ENCODE measurements at regions of chr11 and their contacts with region 1.

Region 1: DNA sequence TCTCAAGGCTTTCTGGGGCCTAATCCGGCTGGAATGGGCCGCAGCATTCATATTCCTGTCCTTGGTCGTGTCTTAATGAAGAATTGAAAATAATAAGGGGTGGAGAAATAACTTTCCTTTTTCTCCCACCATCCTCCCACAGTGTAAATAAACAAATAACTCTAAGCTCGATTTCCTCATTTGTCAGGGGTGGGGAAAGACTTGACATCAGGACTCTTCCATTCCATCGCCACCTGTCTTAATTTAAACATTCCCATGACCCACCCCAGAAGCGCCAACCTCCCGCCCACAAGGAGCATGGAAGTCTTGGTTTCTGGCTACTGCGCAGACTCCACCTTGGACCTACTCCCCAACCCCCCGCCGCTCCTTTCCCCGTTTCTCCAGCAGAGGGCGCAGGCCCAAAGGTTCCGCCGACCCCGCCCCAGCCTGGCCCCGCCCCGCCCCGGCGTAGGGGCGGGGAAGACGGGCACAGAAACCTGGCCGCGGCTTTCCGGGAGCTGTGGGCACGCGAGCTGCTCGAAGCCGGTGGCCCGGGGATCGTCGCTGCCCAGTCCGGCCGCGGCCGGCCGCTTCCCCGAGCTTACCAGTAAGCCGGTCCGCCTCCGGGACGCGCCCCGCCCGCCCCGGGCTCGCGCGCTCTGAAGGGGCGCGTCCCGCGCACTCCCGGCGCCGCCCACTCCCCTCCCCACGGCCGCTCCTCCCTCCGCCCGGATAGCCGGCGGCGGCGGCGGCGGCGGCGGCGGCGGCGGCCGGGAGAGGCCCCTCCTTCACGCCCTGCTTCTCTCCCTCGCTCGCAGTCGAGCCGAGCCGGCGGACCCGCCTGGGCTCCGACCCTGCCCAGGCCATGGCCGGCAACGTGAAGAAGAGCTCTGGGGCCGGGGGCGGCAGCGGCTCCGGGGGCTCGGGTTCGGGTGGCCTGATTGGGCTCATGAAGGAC is at the start of gene CBL:
- DNase-seq: peak; percentile 97
- ATAC-seq: peak; percentile 91
- H3K4me3 Mint-ChIP-seq: peak within 1 kb of the TSS; percentile 90
- H3K27ac Mint-ChIP-seq: peak within 1 kb of the TSS; percentile 93
- H3K4me1 Mint-ChIP-seq: peaks cover 23% of the 10 kb centered on the region
- H3K27me3 Mint-ChIP-seq: no peaks in the 10 kb centered on the region
- CTCF ChIP-seq: peak; percentile 84
- total RNA-seq, gene CBL: 27.0 to 27.5 TPM

Region 2: DNA sequence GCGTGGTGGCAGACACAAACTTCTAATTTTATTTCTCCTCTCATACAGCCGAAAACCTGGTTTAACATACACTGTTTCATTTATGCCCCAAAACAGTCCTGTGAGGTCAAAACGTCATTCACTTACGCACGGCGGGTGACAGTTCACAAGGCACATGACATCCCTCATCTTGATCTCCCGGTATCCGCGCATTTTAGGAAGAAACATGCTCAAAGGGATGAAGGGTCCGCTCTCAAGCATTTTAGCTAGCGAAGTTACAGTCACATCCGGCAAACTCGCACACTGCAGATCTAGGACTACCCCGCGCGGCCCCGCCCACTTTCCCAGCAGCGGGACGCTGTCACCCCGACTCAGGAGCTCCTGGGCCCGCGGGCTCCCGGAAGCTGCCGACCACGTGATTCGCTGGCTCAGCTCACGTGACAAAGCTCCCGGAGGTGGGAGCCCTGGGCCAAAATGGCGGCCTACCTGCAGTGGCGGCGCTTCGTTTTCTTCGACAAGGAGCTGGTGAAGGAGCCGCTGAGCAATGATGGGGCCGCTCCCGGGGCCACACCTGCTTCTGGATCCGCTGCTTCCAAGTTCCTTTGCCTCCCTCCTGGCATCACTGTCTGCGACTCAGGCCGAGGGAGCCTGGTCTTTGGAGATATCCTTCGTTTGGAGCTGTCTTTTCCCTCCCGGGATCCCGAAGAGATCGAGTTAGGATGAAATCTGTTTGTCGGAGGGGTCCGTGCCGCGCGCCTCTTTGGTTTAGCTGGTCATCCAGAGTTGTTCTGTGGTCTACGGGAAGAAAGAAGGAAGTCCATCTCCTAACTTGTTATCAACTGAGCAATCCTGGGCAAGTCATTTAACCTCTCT is 138.2 kb before region 1 on chr11 and contains the start of gene VPS11:
- CTCF ChIA-PET with region 1: interaction called, 10 read pairs
- POLR2A ChIA-PET with region 1: no interaction called
- intact Hi-C with region 1: no loop called
- DNase-seq: peak; percentile 99
- ATAC-seq: peak; percentile 98
- H3K4me3 Mint-ChIP-seq: peak within 1 kb of the TSS; percentile 87
- H3K27ac Mint-ChIP-seq: peak within 1 kb of the TSS; percentile 94
- H3K4me1 Mint-ChIP-seq: peaks cover 34% of the 10 kb centered on the region
- H3K27me3 Mint-ChIP-seq: no peaks in the 10 kb centered on the region
- CTCF ChIP-seq: no peak
- total RNA-seq, gene VPS11: 17.1 to 17.2 TPM

Region 3: DNA sequence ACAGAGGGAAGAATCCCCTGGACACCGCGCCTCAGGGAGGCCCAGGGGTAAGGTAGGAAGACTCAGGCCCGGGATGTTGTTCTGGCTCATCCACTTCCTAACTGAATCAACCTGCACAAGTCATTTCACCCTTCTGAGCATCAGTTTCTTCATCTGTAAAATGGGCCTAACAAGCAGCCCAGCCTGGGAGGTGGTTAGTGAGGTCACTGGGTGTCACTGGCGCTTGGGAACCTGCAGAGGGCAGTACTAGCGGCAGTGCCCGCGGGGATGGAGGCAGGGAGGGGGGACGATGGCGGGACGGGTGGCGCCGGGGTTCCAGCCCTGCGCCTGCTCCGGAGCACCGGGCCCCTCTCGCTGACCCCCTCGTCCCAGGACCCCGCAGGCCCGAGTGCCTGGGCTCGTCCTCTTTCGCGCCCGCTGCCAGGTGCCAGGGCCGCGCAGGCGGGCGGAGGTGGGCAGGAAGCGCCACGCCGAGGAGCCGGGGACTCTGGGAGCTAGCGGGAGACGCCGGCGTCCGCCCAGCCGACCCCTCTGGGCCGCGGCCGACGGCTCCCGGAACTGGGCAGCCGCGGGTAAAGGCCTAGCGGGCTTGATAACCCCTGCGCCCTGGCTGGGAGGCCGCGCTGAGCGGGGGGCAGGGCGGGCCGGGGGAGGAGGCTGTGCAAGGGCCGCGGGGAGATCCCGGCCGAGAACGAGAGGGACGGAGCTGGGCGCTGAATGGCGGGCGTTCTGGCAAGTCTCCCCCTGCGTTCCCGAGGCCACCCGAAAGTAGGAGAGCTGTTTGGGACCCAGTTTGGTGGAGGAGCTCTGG is 37.2 kb before region 1 on chr11 and contains the start of gene NLRX1:
- CTCF ChIA-PET with region 1: interaction called, 10 read pairs
- POLR2A ChIA-PET with region 1: interaction called, 9 read pairs
- intact Hi-C with region 1: no loop called
- DNase-seq: peak; percentile 91
- ATAC-seq: peak; percentile 95
- H3K4me3 Mint-ChIP-seq: peak within 1 kb of the TSS; percentile 89
- H3K27ac Mint-ChIP-seq: peak within 1 kb of the TSS; percentile 92
- H3K4me1 Mint-ChIP-seq: peaks cover 9% of the 10 kb centered on the region
- H3K27me3 Mint-ChIP-seq: no peaks in the 10 kb centered on the region
- CTCF ChIP-seq: peak; percentile 89
- total RNA-seq, gene NLRX1: 20.1 to 21.3 TPM

Region 4: GRCh38 chr11:119262668-119263351 is 57.0 kb after region 1 on chr11:
- CTCF ChIA-PET with region 1: interaction called, 37 read pairs
- POLR2A ChIA-PET with region 1: interaction called, 7 read pairs
- intact Hi-C with region 1: loop called (anchors 2 kb)
- DNase-seq: peak; percentile 15
- ATAC-seq: peak; percentile 83
- H3K4me3 Mint-ChIP-seq: no peak overlapping the region
- H3K27ac Mint-ChIP-seq: no peak overlapping the region
- H3K4me1 Mint-ChIP-seq: peaks cover 52% of the 10 kb centered on the region
- H3K27me3 Mint-ChIP-seq: no peaks in the 10 kb centered on the region
- CTCF ChIP-seq: peak; percentile 28

Region 5: DNA sequence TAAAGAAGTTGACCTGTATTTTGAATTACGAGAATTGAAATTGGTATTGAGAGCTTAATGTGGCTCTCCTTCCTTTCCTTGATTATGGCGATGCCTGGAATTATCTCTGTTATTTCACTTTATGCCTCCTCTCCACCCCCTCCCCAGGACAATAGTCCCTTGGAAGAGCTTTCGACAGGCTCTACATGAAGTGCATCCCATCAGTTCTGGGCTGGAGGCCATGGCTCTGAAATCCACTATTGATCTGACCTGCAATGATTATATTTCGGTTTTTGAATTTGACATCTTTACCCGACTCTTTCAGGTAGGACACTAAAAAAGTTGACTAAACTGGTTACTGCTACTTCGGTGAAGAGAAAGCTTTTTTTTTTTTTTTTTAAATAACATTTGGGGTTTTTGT is 67.9 kb after region 1 on chr11:
- CTCF ChIA-PET with region 1: interaction called, 15 read pairs
- POLR2A ChIA-PET with region 1: interaction called, 3 read pairs
- intact Hi-C with region 1: no loop called
- DNase-seq: no peak
- ATAC-seq: no peak
- H3K4me3 Mint-ChIP-seq: no peak overlapping the region
- H3K27ac Mint-ChIP-seq: no peak overlapping the region
- H3K4me1 Mint-ChIP-seq: peaks cover 12% of the 10 kb centered on the region
- H3K27me3 Mint-ChIP-seq: no peaks in the 10 kb centered on the region
- CTCF ChIP-seq: no peak

Region 6: GRCh38 chr11:119284344-119285157 is 78.7 kb after region 1 on chr11:
- CTCF ChIA-PET with region 1: interaction called, 53 read pairs
- POLR2A ChIA-PET with region 1: interaction called, 9 read pairs
- intact Hi-C with region 1: loop called (anchors 2 kb)
- DNase-seq: no peak
- ATAC-seq: peak; percentile 93
- H3K4me3 Mint-ChIP-seq: no peak overlapping the region
- H3K27ac Mint-ChIP-seq: peak overlapping the region; percentile 5
- H3K4me1 Mint-ChIP-seq: peaks cover 19% of the 10 kb centered on the region
- H3K27me3 Mint-ChIP-seq: no peaks in the 10 kb centered on the region
- CTCF ChIP-seq: no peak

Region 7: GRCh38 chr11:119306373-119306890 is 100.6 kb after region 1 on chr11:
- CTCF ChIA-PET with region 1: interaction called, 13 read pairs
- POLR2A ChIA-PET with region 1: interaction called, 4 read pairs
- intact Hi-C with region 1: no loop called
- DNase-seq: peak; percentile 62
- ATAC-seq: peak; percentile 91
- H3K4me3 Mint-ChIP-seq: peak overlapping the region; percentile 40
- H3K27ac Mint-ChIP-seq: peak overlapping the region; percentile 91
- H3K4me1 Mint-ChIP-seq: peaks cover 25% of the 10 kb centered on the region
- H3K27me3 Mint-ChIP-seq: no peaks in the 10 kb centered on the region
- CTCF ChIP-seq: no peak

Region 8: DNA sequence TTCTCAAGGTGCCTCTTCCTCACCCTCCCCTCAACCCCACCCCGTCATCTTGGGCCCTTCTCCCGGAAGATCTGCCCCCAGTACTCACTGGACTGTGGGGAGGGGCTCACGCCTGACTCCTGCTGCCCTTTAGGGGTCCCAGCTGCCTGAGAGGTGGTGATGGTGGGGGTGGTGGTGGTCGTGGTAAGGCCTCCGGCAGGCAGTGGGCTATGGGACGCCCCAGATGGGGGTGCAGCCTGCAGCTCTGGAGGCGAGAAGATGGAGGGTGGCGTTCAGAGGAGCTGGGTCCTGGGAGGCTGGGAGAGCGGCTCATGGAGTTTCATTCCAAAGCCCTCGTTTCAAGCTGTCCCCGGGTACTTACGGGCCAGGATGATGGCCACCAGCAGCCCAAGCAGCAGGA is 139.8 kb after region 1 on chr11:
- CTCF ChIA-PET with region 1: no interaction called
- POLR2A ChIA-PET with region 1: no interaction called
- intact Hi-C with region 1: no loop called
- DNase-seq: no peak
- ATAC-seq: no peak
- H3K4me3 Mint-ChIP-seq: no peak overlapping the region
- H3K27ac Mint-ChIP-seq: no peak overlapping the region
- H3K4me1 Mint-ChIP-seq: peaks cover 12% of the 10 kb centered on the region
- H3K27me3 Mint-ChIP-seq: peaks cover 22% of the 10 kb centered on the region
- CTCF ChIP-seq: no peak